ENCODE measurements at regions of chr5 and their contacts with region 1.

Region 1: DNA sequence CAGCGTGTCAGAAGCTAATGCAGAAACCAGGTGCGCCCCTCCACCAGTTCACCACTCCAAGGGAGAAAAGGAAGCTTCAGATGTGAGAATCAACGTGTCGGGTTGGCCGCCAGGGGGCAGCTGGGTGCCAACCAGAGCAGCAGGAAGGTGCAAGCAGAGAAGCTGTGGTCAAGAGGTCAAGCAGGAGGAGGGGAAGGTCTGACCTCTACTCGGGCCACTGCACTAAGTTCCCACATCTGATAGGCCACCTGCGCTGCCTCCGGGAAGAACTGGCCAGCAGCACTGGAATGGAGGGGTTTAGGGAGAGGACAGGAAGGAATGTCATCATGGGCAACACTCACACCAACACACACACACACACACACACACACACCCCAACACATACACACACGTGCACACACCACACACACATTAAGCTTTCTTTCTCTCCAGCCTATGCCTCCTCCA is 31.4 kb downstream of the ANXA6 start:
- H3K4me3 ChIP-seq: no peak overlapping the region
- H3K27ac ChIP-seq: no peak overlapping the region
- H3K4me1 ChIP-seq: no peaks in the 10 kb centered on the region
- CTCF ChIP-seq: peak; percentile 83

Region 2: DNA sequence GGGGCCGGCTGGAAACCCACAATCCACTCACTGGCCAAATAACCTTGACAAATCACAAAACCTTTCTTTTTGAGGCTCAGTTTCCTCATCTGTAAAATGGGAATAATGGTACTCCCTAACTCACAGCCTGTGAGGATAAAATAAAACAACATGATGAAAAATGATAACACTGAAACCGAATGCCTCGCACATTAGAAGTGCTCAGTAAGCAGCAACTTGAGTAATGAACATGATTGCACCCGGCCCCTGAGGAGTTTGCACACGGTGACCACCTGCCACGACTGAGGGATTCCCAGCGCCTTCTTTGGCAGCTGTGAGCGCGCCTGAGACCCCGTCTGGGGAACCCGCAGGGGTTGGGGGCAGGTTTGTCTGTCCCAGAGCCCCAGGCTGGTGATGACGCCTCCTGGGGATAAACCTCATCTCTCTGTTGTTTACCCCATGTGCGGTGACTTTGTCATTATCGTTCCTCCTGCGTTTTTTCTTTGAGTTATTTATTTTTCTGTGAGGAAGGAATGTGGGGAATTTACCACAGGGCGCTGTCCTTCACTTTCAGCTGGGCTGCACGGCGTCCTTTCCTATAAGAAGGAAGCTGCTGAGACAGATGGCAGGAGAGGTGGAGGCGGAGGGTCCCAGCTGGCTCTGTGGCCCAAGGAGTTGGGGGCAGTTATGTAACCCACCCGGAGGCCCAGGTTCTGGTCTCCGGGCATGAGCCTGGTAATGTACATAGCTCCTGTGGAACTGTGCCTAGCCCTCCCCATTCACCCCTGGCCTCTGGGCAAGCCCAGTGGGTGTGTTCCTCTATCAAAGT is 488.8 kb before region 1 on chr5:
- CTCF ChIA-PET with region 1: no interaction called
- POLR2A ChIA-PET with region 1: no interaction called
- H3K4me3 ChIP-seq: no peak overlapping the region
- H3K27ac ChIP-seq: no peak overlapping the region
- H3K4me1 ChIP-seq: peaks cover 19% of the 10 kb centered on the region
- CTCF ChIP-seq: no peak

Region 3: GRCh38 chr5:151110122-151110681 is 16.0 kb before region 1 on chr5:
- CTCF ChIA-PET with region 1: interaction called, 35 read pairs
- POLR2A ChIA-PET with region 1: no interaction called
- H3K4me3 ChIP-seq: no peak overlapping the region
- H3K27ac ChIP-seq: no peak overlapping the region
- H3K4me1 ChIP-seq: no peaks in the 10 kb centered on the region
- CTCF ChIP-seq: no peak

Region 4: DNA sequence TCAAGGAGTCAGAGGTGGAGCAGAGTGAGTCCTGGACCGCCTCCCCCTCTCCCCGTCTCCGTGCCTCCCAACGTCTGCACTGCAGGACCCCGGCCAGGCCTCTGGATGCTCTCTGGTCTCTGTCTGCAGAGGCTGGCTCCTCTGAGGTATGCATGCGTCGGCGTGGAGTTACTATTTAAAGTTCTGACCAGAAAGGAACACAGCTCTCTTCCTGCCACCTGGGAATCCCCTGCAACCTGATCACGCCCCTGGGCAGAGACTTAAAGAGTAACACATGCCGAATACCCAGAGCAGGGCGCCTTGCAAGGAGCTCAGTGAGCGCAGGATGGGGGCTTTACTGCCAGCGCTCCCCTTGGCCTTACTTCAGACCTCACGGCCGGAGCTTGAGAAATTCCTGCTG is 15.3 kb after region 1 on chr5:
- CTCF ChIA-PET with region 1: interaction called, 43 read pairs
- POLR2A ChIA-PET with region 1: interaction called, 4 read pairs
- H3K4me3 ChIP-seq: no peak overlapping the region
- H3K27ac ChIP-seq: no peak overlapping the region
- H3K4me1 ChIP-seq: no peaks in the 10 kb centered on the region
- CTCF ChIP-seq: no peak

Region 5: DNA sequence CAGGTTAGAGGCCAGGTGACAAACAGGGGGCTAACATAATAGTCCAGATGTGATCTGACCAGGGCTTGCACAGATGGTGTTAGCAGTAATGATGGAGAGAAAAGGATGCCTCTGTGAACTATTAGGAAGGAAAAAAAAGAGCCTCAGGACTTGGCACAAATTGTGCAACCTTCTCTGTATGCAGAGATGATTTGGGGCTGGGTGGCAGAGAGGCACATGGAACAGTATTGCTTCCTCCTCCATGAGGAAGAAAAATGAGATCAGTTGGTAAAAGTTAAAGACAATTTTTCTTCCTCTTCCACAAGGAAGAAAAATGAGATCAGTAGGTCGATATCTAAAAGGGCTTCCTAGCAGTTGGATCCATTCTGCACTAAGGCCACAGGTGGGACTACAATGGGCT is 45.3 kb after region 1 on chr5:
- CTCF ChIA-PET with region 1: interaction called, 278 read pairs
- POLR2A ChIA-PET with region 1: no interaction called
- H3K4me3 ChIP-seq: no peak overlapping the region
- H3K27ac ChIP-seq: no peak overlapping the region
- H3K4me1 ChIP-seq: no peaks in the 10 kb centered on the region
- CTCF ChIP-seq: no peak

Region 6: DNA sequence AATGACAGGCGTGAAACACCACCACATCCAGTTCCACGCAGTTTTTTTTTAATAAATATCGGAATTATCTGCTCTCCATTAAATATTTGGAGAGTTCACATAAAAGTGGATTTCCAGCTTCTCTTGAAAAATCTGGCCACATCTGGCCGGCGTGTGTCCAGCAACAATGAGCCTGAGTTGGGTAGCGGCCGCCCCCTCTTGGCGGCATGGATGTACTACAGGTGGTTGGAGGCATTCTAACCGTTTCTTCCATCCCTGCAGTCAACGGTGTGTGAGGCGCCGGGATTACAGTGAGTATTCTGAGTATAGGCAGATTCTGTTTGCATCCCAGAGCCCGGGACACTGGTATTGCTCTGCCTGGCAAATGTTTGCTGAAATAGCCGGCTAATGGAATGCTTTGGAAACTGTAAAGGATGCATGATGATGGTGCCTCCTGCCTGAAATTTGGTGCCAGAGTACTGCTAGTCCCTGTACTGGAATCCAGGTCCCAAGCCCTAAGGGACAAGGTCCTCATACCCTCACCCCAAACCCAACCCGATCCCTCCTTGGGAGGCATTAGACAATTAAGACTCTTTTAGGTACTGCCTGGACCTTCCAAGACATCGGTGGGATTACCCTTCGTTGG is 113.1 kb after region 1 on chr5:
- CTCF ChIA-PET with region 1: interaction called, 54 read pairs
- POLR2A ChIA-PET with region 1: no interaction called
- H3K4me3 ChIP-seq: no peak overlapping the region
- H3K27ac ChIP-seq: no peak overlapping the region
- H3K4me1 ChIP-seq: no peaks in the 10 kb centered on the region
- CTCF ChIP-seq: peak; percentile 61

Measured in HEK293 (cell line).